ENCODE measurements at regions of chr9 and their contacts with region 1.

Region 1: GRCh38 chr9:109517901-109518377 is 19.8 kb upstream of the PTPN3 start:
- DNase-seq: no peak
- H3K4me3 ChIP-seq: no peak overlapping the region
- H3K27ac ChIP-seq: no peak overlapping the region
- H3K4me1 ChIP-seq: peaks cover 0 to 23% (median 4%) of the 10 kb centered on the region in 4 donors
- H3K27me3 ChIP-seq: no peaks in the 10 kb centered on the region
- CTCF ChIP-seq: no peak

Region 2: GRCh38 chr9:108913391-108913790 is 604.5 kb before region 1 on chr9:
- intact Hi-C with region 1: no loop called
- DNase-seq: no peak
- H3K4me3 ChIP-seq: no peak overlapping the region
- H3K27ac ChIP-seq: no peak overlapping the region
- H3K4me1 ChIP-seq: no peaks in the 10 kb centered on the region
- H3K27me3 ChIP-seq: no peaks in the 10 kb centered on the region
- CTCF ChIP-seq: no peak

Region 3: DNA sequence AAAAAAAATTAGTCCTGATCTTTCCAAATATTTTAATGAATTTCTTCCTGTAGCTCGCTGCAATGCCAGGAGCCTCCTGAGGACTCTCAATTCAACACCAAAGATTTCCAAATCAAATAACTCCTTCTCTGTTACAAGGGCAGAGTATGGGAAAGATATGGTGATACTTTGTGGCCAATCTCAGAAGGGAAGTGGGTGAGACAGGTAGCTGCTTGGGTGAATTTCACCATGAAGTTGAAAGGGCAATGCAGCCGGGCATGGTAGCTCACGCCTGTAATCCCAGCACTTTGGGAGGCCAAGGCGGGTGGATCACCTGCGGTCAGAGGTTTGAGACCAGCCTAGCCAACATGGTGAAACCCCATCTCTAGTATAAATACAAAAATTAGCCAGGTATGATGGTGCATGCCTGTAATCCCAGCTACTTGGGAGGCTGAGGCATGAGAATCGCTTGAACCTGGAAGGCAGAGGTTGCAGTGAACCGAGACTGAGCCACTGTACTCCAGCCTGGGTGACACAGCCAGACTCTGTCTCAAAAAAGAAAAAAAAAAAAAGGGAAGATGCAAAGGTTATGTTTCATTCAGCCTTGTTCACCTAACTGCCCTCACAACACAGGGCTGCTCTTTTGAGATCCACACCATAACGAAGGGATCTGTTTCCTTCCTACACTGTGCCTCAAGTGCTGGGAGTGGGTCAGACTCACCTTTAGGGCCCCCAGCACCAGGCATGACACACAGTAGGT is 78.4 kb before region 1 on chr9:
- intact Hi-C with region 1: loop called (anchors 2 kb)
- DNase-seq: no peak
- H3K4me3 ChIP-seq: no peak overlapping the region
- H3K27ac ChIP-seq: no peak overlapping the region
- H3K4me1 ChIP-seq: peaks cover 0 to 12% (median 5%) of the 10 kb centered on the region in 4 donors
- H3K27me3 ChIP-seq: no peaks in the 10 kb centered on the region
- CTCF ChIP-seq: no peak

Region 4: DNA sequence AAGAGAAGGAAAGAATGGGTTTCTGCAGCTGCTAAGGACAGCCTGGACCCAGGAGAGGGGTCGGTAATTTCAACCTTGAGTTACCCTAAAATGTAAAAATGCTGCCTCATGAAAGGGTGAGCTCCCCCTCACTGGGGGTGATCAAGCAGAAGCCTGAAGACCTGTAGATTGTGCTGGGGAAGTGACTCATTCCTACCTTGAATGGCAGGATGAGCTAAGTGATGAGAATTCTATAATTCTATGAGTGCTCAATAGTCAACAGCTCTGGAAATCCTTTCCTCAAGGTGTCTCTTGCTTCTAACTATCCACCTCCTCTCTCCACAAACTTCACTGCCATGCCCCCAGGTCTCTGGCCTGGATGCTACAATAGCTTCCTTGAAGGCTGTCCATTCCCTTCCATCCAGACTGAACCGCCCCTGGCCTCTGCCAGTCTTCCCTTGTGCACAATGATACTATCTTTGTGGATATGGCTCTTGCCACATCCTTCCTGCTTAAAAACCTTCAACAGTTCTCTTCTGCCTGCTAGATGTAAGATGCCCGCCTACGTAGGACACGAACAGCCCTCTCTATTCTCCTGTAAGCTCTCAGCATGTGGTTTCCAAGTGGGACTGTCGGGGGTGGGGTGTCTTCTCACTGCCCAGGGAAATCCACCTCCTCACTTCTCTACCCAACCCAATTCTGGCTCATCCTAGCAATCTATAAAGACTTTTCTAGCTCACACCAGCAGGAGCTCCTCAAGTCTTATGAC is 70.4 kb before region 1 on chr9:
- intact Hi-C with region 1: loop called (anchors 2 kb)
- DNase-seq: no peak
- H3K4me3 ChIP-seq: no peak overlapping the region
- H3K27ac ChIP-seq: no peak overlapping the region
- H3K4me1 ChIP-seq: no peaks in the 10 kb centered on the region
- H3K27me3 ChIP-seq: no peaks in the 10 kb centered on the region
- CTCF ChIP-seq: no peak

Region 5: DNA sequence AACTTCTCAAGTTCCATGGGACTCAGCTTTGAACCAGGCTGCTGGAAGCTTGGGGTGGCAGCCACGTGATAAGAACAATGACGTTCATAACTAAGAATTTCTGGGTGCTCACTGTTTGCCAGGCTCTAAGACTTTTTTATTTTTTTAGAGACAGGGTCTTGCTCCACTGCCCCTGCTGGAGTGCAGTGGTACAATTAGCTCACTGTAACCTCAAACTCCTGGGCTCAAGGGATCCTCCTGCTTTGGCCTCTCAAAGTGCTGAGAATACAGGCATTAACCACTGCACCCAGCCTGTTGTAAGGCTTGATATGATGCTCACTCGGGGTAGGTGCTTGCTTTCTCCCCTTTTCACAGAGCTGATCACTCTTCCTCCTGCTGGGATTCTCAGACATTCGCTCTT is 58.5 kb before region 1 on chr9:
- intact Hi-C with region 1: no loop called
- DNase-seq: no peak
- H3K4me3 ChIP-seq: no peak overlapping the region
- H3K27ac ChIP-seq: no peak overlapping the region
- H3K4me1 ChIP-seq: no peaks in the 10 kb centered on the region
- H3K27me3 ChIP-seq: no peaks in the 10 kb centered on the region
- CTCF ChIP-seq: no peak

Region 6: GRCh38 chr9:109483744-109484429 is 34.1 kb before region 1 on chr9:
- intact Hi-C with region 1: loop called (anchors 2 kb)
- DNase-seq: no peak
- H3K4me3 ChIP-seq: no peak overlapping the region
- H3K27ac ChIP-seq: no peak overlapping the region
- H3K4me1 ChIP-seq: peaks cover 0 to 28% (median 16%) of the 10 kb centered on the region in 4 donors
- H3K27me3 ChIP-seq: no peaks in the 10 kb centered on the region
- CTCF ChIP-seq: no peak